ENCODE measurements at regions of chr7 and their contacts with region 1.

Region 1: DNA sequence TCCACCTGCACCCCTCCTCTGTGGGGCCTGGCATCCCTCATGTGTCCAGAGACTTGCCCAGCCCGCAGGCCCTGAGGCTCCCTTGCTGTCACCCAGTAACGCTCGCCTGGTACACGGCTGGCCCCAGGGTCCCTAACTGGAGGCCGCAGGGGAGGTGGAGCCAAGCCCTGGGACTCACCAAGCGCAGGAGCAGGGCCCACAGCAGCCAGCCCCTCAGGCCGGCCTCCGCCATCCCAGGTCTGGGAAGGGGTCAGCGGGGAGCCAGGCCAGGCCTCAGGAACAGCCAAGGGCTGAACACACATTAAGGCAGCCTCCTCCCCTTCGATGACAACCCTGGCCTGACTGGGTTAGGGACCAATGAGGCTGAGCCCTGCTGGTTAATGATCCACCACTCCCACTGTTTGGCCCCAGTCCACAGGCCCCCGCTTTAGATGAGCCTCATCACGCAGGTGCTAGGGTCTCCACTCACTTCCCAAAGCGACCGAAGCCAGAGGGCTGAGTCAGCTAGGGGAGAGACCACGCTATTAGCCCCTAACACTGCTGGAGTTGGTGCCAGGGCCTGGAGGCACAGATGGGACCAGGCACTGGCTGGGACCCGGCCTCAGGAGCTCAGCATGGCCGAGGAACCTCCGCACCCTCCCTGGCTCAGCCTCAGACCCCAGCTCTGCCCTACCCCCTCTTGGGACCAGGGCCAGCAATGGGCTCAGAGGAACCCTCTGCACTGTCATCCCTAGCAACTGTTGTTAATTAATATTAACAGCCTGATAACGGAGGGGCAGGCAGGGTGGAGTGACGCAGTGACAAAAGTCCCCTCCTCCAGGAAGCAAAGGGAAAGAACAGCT is at the start of gene NPC1L1:
- DNase-seq: peak; percentile 91
- ATAC-seq: peak; percentile 94
- H3K4me3 ChIP-seq: peak within 1 kb of the TSS; percentile 57 to 79 (median 63)
- H3K27ac ChIP-seq: peak within 1 kb of the TSS; percentile 94
- H3K4me1 ChIP-seq: peaks cover 84% of the 10 kb centered on the region
- H3K27me3 ChIP-seq: no peaks in the 10 kb centered on the region
- CTCF ChIP-seq: peak; percentile 16; the same call in 1 of the 2 replicates
- EP300 ChIP-seq: 0 out of 4 replicates have a peak, but pooled peaks of 1 of the 2 experiments have one; percentile 39
- POLR2A ChIP-seq: peak in 1 of 2 experiments; percentile 96; a peak in 2 of 4 replicates
- RAD21 ChIP-seq: no peak; the same call in 1 of the 2 replicates
- total RNA-seq, gene NPC1L1: 3.8 and 4.8 TPM in 2 replicates

Region 2: DNA sequence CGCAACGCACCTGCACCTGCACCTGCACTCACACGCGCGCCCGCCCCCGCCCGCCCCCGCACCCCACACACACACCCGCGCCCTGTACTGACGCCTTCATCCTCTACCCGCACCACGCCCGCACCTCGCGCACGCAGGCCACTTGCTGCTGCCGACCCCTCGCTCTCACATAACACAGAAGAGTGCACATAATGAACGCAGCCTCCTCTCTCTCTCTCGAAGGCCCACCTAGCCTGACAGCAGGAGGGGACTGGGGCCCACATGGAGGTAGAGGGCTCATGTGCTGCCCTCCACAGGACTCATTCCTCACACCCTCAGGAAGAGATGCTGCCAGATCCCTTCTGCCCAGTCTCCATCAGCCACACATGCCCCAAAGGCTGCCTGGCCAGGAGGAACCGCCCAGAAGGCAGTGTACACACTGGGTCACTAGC is 215.4 kb before region 1 on chr7:
- CTCF ChIA-PET with region 1: no interaction called
- POLR2A ChIA-PET with region 1: no interaction called
- in situ Hi-C with region 1: no loop called
- intact Hi-C with region 1: no loop called
- DNase-seq: no peak
- ATAC-seq: peak; percentile 20; the same call in 1 of the 3 replicates
- H3K4me3 ChIP-seq: no peak overlapping the region
- H3K27ac ChIP-seq: no peak overlapping the region
- H3K4me1 ChIP-seq: 0 out of 2 replicates have a peak, but pooled peaks cover 4% of the 10 kb centered on the region
- H3K27me3 ChIP-seq: peaks cover 9 to 55% of the 10 kb centered on the region in 2 experiments
- CTCF ChIP-seq: 0 out of 2 replicates have a peak, but pooled peaks have one; percentile 3
- EP300 ChIP-seq: no peak
- POLR2A ChIP-seq: no peak
- RAD21 ChIP-seq: no peak

Region 3: DNA sequence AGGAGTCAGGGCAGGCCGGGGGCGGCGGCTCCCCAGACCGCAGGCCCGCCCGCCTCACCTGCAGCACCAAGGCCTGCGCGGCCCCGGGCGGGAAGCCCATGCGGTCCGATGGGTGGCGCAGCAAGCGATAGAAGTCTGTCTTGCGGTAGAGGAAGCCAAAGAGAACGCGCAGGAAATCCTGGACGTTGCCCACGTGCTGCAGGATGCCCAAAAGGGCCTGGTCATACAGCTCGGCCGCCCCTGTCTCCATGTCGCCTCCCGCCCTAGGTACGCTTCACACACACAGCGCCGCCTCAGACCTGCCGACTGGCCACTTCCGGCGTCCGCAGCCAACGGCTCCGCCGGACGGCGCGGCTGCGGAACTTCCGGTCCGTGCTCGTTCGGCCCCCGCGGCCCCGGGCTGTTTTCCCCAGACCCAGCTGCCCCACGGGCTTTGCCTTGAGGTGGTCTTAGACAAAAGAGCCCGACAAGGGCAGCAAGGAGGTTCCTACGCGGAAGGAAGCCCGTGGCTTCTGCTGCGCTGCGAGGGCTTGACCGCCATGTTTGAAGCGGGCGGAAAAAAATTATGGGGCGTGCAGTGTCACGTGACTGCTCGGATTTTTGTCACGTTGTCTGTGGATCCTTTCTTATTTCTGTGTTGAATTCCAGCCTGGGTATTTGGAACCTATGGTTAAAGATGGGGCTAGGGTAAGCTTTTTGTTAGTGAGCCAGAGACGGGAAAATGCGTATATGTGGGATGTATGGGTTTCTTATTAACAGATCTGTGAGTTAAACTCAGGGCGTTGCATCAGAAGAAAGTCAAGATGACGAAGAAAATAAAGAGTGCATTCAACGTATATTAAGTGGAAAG is 50.7 kb before region 1 on chr7 and contains the start of gene NUDCD3:
- CTCF ChIA-PET with region 1: no interaction called
- POLR2A ChIA-PET with region 1: interaction called, 18 read pairs
- in situ Hi-C with region 1: no loop called
- intact Hi-C with region 1: loop called (anchors 5 kb)
- DNase-seq: peak; percentile 75
- ATAC-seq: peak; percentile 99
- H3K4me3 ChIP-seq: peak within 1 kb of the TSS; percentile 74 to 93 (median 90)
- H3K27ac ChIP-seq: peak within 1 kb of the TSS; percentile 96
- H3K4me1 ChIP-seq: peaks cover 55% of the 10 kb centered on the region
- H3K27me3 ChIP-seq: no peaks in the 10 kb centered on the region; a peak in 1 of 5 replicates
- CTCF ChIP-seq: peak; percentile 55
- EP300 ChIP-seq: no peak; a peak in 1 of 4 replicates
- POLR2A ChIP-seq: peak; percentile 78 to 91
- RAD21 ChIP-seq: peak; percentile 62; the same call in 1 of the 2 replicates
- total RNA-seq, gene NUDCD3: 49.9 and 54.6 TPM in 2 replicates

Region 4: GRCh38 chr7:44522315-44522714 is 18.9 kb before region 1 on chr7:
- CTCF ChIA-PET with region 1: no interaction called
- POLR2A ChIA-PET with region 1: no interaction called
- in situ Hi-C with region 1: no loop called
- intact Hi-C with region 1: no loop called
- DNase-seq: no peak
- ATAC-seq: no peak
- H3K4me3 ChIP-seq: no peak overlapping the region
- H3K27ac ChIP-seq: no peak overlapping the region
- H3K4me1 ChIP-seq: no peaks in the 10 kb centered on the region
- H3K27me3 ChIP-seq: no peaks in the 10 kb centered on the region
- CTCF ChIP-seq: no peak
- EP300 ChIP-seq: no peak
- POLR2A ChIP-seq: no peak
- RAD21 ChIP-seq: no peak

Region 5: DNA sequence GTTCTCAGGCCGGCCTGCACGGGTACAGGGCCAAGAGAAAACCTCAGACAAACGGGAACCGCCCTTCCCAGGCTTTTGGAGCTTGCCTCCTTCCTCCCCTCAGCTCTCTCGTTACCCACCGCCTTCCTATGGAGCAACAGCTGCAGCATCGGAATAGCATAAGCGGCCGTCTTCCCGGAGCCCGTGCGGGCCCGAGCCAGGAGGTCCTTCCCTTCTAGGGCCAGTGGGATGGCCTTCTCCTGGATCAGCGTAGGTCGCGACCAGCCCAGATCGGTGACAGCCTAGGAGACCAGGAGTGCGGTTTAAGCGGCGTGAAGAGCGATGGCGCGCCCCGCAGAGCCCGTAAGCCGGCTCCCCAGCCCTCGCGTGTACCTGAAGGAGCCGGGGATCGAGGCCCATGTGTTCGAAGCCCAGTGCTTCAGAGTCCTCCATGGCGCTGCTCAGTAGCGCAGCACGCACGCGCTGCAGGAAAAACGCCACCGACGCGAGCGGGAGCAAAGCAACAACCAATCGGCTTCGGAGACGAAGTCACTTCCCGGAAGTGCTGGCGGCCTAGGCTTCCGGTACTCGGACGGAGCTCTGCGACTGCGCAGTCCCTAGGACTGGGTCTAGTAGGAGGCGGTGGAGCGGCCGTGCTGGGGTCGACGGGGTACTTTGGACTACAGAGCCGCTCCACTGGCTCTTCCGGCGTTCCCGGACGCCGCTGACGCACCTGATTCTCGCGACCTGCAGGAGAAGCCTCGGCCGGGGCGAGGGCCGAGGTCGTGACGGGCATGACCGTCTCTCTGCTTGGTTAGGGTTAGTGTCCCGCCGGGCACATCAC is 32.4 kb after region 1 on chr7 and contains the start of gene DDX56:
- CTCF ChIA-PET with region 1: no interaction called
- POLR2A ChIA-PET with region 1: interaction called, 22 read pairs
- in situ Hi-C with region 1: no loop called
- intact Hi-C with region 1: no loop called
- DNase-seq: peak; percentile 96
- ATAC-seq: peak; percentile 97
- H3K4me3 ChIP-seq: peak within 1 kb of the TSS; percentile 77 to 91 (median 83)
- H3K27ac ChIP-seq: peak within 1 kb of the TSS; percentile 83
- H3K4me1 ChIP-seq: peaks cover 39% of the 10 kb centered on the region
- H3K27me3 ChIP-seq: no peaks in the 10 kb centered on the region; a peak in 1 of 5 replicates
- CTCF ChIP-seq: no peak; the same call in 1 of the 2 replicates
- EP300 ChIP-seq: no peak
- POLR2A ChIP-seq: peak in 1 of 2 experiments; percentile 86; a peak in 2 of 4 replicates
- RAD21 ChIP-seq: peak; percentile 54
- total RNA-seq, gene DDX56: 105 and 120 TPM in 2 replicates